HEK293 (cell line): ENCODE measurements at regions of chr1 and their contacts with region 1.

Region 1: DNA sequence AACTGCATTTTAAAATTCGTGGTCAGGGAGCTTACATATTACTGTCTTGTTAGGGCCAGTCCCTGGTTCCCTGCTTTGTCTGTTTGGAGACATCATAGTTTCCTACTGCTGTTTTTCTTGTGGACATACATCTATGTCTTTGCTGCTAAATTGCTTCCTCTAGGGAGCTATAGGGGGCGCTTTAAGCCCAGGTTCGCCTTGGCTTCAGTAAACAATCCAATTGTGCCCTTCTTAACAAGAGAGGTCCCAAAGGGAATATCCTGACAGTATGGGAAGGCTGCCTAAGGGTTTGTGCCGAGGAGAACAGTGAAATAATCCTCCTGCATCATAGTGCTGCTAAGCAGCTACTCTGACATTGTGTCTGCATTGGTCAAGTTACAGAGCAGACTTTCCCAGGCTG is 112.5 kb downstream of the USH2A start:
- H3K4me3 ChIP-seq: no peak overlapping the region
- H3K27ac ChIP-seq: no peak overlapping the region
- H3K4me1 ChIP-seq: no peaks in the 10 kb centered on the region
- CTCF ChIP-seq: no peak

Region 2: DNA sequence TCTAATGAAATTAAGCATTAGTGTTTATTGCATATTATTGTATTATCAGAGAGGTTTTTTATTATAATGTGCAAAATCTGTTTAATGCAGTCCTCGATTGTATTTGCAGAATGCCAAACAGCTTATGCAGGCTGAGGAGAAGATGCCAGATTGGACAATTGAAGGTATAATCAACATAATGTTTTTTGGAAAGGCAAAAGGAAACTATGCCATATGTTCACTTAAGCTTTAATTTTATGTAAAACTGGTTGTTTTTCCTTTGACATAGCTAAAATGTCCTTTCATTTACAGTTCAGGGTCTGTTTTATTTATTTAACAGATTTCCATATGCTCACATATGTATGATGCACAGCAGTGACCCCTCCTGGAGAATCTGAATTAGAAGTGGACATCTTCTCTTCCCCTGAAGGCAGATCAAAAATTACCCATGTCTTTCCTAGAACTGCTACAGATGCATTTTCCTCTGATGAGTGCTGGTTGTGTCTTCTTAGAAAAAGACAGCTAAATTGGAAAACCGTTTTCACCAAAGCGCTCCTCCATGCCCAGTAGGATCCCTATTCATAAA is 255.9 kb after region 1 on chr1:
- CTCF ChIA-PET with region 1: interaction called, 11 read pairs
- POLR2A ChIA-PET with region 1: no interaction called
- H3K4me3 ChIP-seq: no peak overlapping the region
- H3K27ac ChIP-seq: no peak overlapping the region
- H3K4me1 ChIP-seq: no peaks in the 10 kb centered on the region
- CTCF ChIP-seq: no peak